Heart right ventricle (tissue), 16 donors: ENCODE measurements at regions of chr3 and their contacts with region 1.

Region 1: GRCh38 chr3:52339612-52340011 is 23.5 kb downstream of the DNAH1 start:
- DNase-seq: peak in 1 of 2 donors; percentile 58
- ATAC-seq: peak in 5 of 8 donors; percentile 37 to 54 (median 47)
- H3K4me3 ChIP-seq: no peak overlapping the region
- H3K27ac ChIP-seq: no peak overlapping the region
- H3K4me1 ChIP-seq: no peaks in the 10 kb centered on the region
- H3K27me3 ChIP-seq: no peaks in the 10 kb centered on the region
- CTCF ChIP-seq: peak; percentile 35 to 83 (median 77)

Region 2: DNA sequence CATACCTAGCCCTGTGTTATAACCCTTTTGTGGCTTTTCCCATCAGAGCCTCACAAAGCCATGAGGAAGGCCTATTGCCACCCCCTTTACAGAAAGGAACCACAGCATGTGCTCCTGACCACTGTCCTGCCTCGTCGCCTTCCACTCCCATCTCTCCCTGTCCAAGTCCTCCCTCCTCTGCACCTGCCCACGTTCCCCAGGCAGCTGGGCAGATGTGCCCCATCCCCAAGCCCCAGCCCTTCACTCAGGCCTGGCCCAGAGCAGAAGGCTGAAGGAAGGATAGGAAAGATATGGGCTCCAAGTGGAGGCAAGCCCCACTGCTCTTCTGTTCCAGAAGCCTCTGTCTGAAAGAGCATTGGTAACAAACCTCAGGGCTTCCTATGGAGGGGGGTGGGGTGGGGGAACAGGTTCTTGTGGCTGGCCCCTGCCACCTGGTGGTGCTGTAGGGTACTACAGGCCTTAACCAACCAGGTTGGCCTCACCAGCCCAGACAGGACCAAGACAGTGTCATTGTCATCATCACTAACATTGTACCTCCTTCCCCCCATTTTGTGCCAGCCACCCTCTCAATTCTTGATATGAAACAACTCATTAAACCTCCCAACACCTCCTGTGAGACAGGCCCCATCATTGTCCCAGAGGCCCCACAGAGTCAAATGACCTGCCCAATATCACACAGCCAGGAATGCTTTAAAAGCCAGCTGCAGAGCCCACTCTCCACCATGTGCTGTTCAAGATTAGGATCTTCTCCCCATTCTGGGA is 195.4 kb before region 1 on chr3:
- intact Hi-C with region 1: loop called in 1 of 10 experiments (anchors 5 kb)
- DNase-seq: peak; percentile 79 to 88
- ATAC-seq: peak; percentile 67 to 89 (median 81)
- H3K4me3 ChIP-seq: no peak overlapping the region
- H3K27ac ChIP-seq: no peak overlapping the region
- H3K4me1 ChIP-seq: peaks cover 0 to 21% (median 4%) of the 10 kb centered on the region in 9 donors
- H3K27me3 ChIP-seq: no peaks in the 10 kb centered on the region
- CTCF ChIP-seq: peak; percentile 96 to 99 (median 97)

Region 3: GRCh38 chr3:52220380-52221026 is 119.1 kb before region 1 on chr3:
- intact Hi-C with region 1: loop called in 8 of 10 experiments (anchors 1 to 5 kb)
- DNase-seq: peak; percentile 87 to 88
- ATAC-seq: peak; percentile 50 to 65 (median 56)
- H3K4me3 ChIP-seq: no peak overlapping the region
- H3K27ac ChIP-seq: peak overlapping the region in 3 of 10 donors; percentile 13 to 24 (median 21)
- H3K4me1 ChIP-seq: peaks cover 17 to 68% (median 62%) of the 10 kb centered on the region in 9 donors
- H3K27me3 ChIP-seq: no peaks in the 10 kb centered on the region
- CTCF ChIP-seq: peak; percentile 87 to 94 (median 92)

Region 4: DNA sequence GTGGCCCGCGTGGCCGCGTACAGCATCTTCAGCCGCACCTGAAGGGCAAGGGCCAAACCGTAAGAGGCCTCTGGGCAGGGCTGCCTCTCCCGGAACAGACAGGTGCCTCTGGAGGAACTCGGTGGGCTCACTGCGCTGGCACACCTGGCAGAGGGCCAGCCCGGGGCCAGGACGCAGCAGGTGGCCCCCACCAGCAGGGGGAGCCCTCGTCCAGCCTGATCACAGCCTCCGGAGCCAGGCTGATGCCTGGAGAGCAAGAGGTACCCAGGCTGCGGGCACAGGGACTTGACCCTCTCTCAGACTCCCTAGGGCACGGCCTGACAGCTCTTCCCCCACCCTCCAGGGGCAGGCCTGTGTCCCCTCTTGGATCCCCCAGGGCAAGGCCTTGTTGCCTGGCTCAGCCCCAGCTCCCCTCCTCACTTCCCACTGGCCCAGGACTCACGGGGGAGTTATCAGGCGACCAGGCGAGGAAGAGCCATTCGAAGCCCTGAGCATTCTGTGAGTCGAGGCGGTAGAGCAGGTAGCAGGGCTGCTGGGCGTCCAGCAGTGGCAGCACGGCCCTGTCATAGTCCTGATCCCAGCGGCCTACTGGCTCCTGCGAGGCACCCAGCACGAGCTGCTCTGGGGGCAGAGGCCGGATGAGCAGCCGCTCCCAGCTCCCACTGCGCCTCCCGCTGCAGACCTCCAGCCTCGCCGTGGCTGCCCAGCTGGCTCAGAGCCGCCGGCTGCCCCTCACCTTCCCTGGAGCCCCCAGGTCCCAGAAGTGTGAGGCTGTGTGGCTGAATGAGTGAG is 107.9 kb before region 1 on chr3:
- intact Hi-C with region 1: loop called in 5 of 10 experiments (anchors 2 to 5 kb)
- DNase-seq: peak; percentile 63 to 82
- ATAC-seq: peak in 6 of 8 donors; percentile 5 to 38 (median 20)
- H3K4me3 ChIP-seq: peak overlapping the region in 6 of 10 donors; percentile 5 to 49 (median 28)
- H3K27ac ChIP-seq: peak overlapping the region in 4 of 10 donors; percentile 25 to 93 (median 33)
- H3K4me1 ChIP-seq: peaks cover 12 to 51% (median 40%) of the 10 kb centered on the region in 9 donors
- H3K27me3 ChIP-seq: no peaks in the 10 kb centered on the region
- CTCF ChIP-seq: peak; percentile 80 to 98 (median 84)

Region 5: GRCh38 chr3:52291508-52292181 is 48.0 kb before region 1 on chr3:
- intact Hi-C with region 1: loop called (anchors 1 to 10 kb)
- DNase-seq: peak in 1 of 2 donors; percentile 33
- ATAC-seq: no peak
- H3K4me3 ChIP-seq: no peak overlapping the region
- H3K27ac ChIP-seq: no peak overlapping the region
- H3K4me1 ChIP-seq: peaks cover 5 to 23% (median 14%) of the 10 kb centered on the region in 9 donors
- H3K27me3 ChIP-seq: no peaks in the 10 kb centered on the region
- CTCF ChIP-seq: peak in 8 of 9 donors; percentile 32 to 65 (median 58)

Region 6: GRCh38 chr3:52428151-52429005 is 88.8 kb after region 1 on chr3:
- intact Hi-C with region 1: no loop called
- DNase-seq: peak in 1 of 2 donors; percentile 81
- ATAC-seq: peak; percentile 69 to 87 (median 77)
- H3K4me3 ChIP-seq: no peak overlapping the region
- H3K27ac ChIP-seq: peak overlapping the region in 8 of 10 donors; percentile 3 to 86 (median 70)
- H3K4me1 ChIP-seq: peaks cover 19 to 48% (median 39%) of the 10 kb centered on the region in 9 donors
- H3K27me3 ChIP-seq: no peaks in the 10 kb centered on the region
- CTCF ChIP-seq: peak; percentile 55 to 86 (median 79)